ENCODE measurements at regions of chr16 and their contacts with region 1.

Region 1: DNA sequence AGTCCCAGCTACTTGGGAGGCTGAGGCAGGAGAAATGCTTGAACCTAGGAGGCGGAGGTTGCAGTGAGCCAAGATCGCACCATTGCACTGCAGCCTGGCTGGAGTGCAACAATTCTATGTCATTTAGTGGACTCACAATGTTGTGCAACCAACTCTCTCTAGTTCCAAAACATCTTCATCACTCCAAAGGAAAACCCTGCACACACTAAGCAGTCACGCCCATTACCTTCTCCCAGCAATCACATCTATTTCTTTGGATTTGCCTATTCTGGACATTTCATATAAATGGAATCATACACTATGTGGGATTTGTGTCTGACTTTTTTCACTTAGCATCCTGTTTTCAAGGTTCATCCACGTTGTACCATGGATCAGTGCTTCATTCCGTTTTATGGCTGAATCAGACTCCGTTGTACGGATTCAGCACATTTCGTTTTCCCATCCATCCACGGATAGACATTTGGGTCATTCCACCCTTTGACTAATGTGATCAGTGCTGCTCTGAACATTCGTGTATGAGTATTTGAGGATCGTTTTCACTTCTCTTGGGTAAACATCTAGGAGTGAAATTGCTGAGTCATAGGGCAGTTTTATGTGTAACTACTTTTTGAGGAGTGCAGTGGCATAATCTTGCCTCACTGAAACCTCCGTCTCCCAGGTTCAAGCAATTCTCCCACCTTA is 45.3 kb upstream of the EMP2 start:
- DNase-seq: no peak
- ATAC-seq: no peak

Region 2: DNA sequence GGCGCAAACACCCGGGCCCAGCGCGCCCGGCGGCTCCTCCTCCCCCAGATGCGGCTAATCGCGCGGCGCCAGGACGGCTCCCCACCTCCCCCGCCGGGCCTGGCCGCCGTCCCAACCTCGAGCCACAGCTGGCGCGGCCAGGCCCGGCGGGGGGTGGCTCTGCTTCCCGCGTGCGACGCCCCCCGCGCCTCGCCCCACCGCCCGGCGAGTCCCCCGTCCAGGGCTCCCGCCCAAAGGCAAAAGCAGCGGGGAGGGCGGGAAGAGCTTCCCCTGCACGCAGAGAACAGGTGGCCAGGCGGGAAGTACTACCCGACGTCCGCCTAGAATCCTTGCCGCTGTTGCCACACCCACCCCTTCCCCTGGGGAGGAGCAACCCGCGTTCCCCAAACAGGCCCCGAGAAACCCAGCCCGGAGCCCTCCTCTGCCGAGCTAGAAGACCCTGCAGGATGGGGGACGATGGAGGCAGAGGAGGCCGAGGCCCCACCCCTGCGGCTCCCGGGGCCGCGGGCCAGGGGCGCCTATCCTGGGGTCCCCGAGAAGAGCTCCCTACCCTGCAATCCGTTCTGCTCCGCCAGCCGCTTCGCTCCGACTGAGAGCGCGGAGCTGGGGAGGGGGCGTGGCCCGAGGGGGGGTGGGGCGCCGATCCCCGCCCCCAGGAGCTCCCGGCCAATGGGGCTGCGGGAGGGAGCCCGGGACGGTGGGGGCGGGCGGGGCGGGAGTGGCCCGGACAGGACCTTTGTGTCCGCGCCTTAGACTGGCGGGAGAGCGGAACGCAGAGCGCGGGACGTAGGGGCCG is 1757.1 kb before region 1 on chr16 and contains the start of gene CARHSP1:
- intact Hi-C with region 1: loop called (anchors 10 kb)
- DNase-seq: peak; percentile 94
- ATAC-seq: peak; percentile 90
- total RNA-seq, gene CARHSP1: 118 TPM

Region 3: GRCh38 chr16:10541366-10541765 is 84.4 kb before region 1 on chr16:
- intact Hi-C with region 1: loop called (anchors 10 kb)
- DNase-seq: no peak
- ATAC-seq: peak; percentile 78

Region 4: DNA sequence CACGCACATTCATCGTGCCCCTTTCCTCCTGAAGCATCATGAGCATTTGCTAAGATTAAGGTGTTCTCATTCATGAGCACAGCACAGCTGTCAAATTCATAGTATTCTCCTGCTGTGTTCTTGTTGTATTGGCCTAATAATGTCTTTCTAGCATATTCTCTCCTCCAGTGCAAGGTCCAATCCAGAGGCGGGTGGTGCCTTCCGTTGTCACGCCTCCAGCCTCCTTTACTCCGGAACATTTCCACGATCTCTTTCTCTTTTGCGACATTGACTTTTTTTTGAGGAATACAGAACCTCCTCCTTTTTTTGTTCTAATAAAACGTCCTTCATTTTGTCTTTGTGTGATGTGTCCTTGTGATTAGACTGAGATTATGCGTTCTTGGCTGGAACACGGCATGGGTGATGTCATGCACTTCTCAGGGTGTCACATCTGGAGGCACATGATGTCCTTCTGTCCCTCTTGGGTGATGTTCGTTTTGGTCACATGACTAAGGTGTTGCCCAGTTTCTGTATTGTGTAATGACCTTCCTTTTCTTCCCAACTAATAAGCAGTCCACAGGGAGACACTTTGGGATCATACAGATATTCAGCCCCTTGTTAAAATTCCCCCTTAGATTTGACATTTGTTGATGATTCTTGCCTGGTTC is 385.0 kb after region 1 on chr16:
- intact Hi-C with region 1: no loop called
- DNase-seq: no peak
- ATAC-seq: peak; percentile 80